GM10248 (cell line): ENCODE measurements at regions of chr6 and their contacts with region 1.

Region 1: GRCh38 chr6:6148192-6148815 is 141.6 kb upstream of the NRN1 start:
- DNase-seq: no peak
- CTCF ChIP-seq: no peak

Region 2: DNA sequence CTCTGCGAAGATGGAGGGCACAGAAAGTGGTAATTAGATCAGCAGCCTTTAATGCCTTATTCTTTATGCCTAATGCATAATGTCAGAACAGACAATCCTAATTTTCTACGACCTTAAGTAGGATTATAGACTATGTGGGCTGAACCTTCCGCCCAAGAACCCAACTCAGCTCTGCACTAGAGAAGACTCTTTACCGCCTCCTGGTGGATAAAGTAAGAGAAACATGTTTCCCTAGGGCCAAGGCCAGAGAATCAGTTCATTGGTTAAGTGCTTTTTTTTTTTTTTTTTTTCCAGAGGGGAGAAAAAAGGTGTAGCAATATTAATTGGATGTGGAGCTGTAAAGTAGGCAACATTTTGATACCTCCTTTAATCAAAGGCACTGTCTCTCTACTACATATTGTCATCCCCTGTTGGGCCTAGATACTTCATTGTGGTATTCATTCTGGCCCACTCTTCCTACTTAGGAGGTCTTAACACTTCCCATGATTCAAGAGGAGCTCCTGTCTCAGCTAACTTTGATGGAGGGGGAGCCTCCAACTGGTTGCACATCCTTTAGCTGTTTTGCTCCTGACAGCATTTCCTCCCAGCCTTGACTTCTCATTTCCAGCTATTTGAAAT is 16.7 kb before region 1 on chr6:
- CTCF ChIA-PET with region 1: interaction called, 10 read pairs
- POLR2A ChIA-PET with region 1: no interaction called
- DNase-seq: peak; percentile 51
- CTCF ChIP-seq: peak; percentile 29

Region 3: DNA sequence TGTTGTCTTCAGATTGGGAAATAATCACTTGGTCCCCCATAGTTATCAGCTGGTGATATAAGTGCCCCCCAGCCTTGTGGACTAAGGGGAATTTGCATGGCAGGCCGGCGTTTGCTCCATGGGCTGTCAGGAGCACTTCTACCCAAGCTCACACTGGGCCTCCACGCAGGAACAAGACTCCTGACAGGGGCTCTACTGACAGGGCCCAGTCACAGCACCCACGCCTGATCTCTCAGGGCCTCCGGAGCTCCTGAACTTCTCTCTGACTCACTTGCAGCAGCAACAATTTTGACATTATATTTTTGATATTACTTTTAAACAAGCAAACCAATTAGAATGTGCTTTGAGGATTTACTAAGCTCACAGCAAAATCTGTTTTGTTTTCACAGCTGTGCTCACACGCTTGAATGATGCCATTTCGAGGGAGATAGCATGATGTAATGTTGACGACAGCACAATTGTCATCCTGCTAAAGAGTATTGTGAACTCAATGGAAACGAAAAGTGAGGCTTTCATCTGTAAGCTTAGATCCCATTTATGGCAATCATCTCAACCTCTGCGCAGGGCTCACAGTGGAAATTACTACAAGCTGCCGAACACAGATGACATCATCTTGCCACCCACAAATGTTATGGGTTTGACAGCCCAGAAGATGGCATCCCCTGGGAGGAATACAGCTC is 1791.0 kb after region 1 on chr6:
- CTCF ChIA-PET with region 1: no interaction called
- POLR2A ChIA-PET with region 1: no interaction called
- DNase-seq: no peak
- CTCF ChIP-seq: no peak